ENCODE measurements at regions of chr6 and their contacts with region 1.

Region 1: DNA sequence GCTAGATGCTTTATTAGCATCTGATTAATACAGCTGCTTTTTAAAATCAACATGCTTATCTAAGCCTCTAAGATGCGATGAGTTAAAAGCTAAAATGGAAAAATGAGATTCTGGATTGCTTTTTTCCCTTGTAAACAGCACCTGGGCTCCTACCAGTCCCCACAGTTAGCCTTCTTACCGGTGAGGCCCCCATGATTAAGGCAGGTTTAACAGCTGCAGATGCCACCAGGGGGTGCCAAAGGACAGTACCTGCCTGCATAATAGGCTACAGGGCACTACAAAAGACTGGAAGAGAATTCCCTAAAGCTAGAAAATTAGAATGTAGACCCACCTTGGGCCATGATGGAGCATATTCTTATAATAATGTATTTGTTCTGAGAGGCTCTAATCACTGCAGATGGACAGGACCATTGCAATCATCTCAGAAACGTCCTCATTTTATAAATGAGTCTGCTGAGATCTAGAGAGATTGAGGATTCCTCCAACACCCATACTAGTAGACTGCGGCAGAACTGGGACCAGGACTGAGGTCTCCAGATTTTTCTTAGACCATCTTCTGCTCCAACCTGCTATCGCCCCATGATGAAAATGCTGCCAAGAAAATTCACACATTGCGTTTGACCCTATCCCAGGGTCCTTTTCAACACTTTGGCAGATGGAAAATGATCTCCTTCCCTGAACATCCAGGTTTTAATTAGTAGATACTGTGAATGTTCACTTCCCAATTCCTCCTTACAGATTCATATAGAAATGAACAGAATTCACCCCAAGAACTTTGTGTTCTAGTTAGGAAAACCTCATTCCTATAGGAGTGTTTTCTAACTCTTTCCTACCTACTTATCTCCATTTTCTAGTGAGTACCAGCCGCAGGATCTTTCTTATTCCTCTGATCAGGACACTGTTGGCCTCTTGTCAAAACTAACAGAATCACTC is 148.8 kb downstream of the RPS12 start:
- DNase-seq: peak; percentile 77
- H3K4me3 Mint-ChIP-seq: no peak overlapping the region
- H3K27ac Mint-ChIP-seq: no peak overlapping the region
- H3K4me1 Mint-ChIP-seq: no peaks in the 10 kb centered on the region
- H3K27me3 Mint-ChIP-seq: peaks cover 29% of the 10 kb centered on the region

Region 2: GRCh38 chr6:132669690-132670291 is 293.4 kb before region 1 on chr6:
- CTCF ChIA-PET with region 1: interaction called, 3 read pairs
- intact Hi-C with region 1: loop called (anchors 1 kb)
- DNase-seq: no peak
- H3K4me3 Mint-ChIP-seq: no peak overlapping the region
- H3K27ac Mint-ChIP-seq: no peak overlapping the region
- H3K4me1 Mint-ChIP-seq: peaks cover 3% of the 10 kb centered on the region
- H3K27me3 Mint-ChIP-seq: no peaks in the 10 kb centered on the region

Region 3: DNA sequence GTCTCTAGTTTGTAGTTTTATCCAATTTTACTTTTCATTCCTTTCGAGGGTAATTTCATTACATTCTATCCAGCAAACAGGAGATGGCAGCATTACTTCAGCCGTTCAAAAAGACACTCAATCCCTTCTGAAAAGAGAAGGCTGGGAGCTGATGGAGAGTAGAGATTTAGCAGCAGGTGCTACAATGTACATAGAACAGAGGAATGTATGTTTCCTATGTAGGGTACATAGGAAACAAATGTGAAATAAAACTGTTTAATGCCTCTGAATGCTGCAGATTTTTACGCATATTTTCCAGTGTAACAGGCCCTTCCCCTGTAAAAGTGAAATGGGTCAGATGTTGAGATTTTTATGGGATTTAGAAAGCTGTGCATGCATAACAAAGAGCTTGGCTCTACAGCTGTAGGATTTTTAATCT is 132.9 kb before region 1 on chr6:
- CTCF ChIA-PET with region 1: interaction called, 22 read pairs
- intact Hi-C with region 1: loop called (anchors 1 kb)
- DNase-seq: no peak
- H3K4me3 Mint-ChIP-seq: no peak overlapping the region
- H3K27ac Mint-ChIP-seq: no peak overlapping the region
- H3K4me1 Mint-ChIP-seq: no peaks in the 10 kb centered on the region
- H3K27me3 Mint-ChIP-seq: no peaks in the 10 kb centered on the region

Region 4: GRCh38 chr6:133017581-133017980 is 54.4 kb after region 1 on chr6:
- CTCF ChIA-PET with region 1: no interaction called
- intact Hi-C with region 1: no loop called
- DNase-seq: no peak
- H3K4me3 Mint-ChIP-seq: no peak overlapping the region
- H3K27ac Mint-ChIP-seq: no peak overlapping the region
- H3K4me1 Mint-ChIP-seq: no peaks in the 10 kb centered on the region
- H3K27me3 Mint-ChIP-seq: peaks cover 4% of the 10 kb centered on the region

Region 5: DNA sequence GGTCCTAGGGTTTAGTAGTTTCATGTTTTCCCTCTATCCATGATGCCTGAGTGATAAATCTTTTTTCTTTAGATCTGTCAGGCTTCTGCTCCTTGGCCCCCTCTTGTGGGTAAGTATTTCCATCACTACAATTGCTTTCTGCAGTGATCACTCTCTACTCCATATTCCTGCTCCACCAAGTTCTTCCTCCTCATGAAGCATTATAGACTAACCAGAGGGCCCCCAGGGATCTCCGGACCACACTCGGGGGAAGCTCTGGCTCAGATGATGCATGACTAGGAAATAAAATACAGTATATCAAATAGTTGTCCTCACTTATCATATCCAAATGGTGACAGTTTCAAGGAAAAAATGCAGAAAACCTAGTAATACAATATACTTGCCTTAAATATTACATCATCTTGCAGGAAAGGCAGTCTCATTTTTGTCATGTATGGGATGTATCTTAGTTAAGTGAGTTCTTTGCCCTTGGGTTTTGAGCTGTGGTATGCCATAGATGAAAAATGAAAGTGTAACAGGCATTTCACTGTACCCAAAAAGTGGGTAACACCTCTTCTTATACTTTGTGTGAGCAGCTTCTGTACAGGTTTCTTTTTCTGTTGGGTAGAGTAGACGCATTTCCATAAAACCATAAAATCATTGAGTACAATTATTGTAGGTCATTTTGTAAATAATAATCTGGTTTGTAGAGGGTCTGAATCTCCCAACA is 77.0 kb after region 1 on chr6:
- CTCF ChIA-PET with region 1: no interaction called
- intact Hi-C with region 1: loop called (anchors 2 kb)
- DNase-seq: no peak
- H3K4me3 Mint-ChIP-seq: no peak overlapping the region
- H3K27ac Mint-ChIP-seq: no peak overlapping the region
- H3K4me1 Mint-ChIP-seq: no peaks in the 10 kb centered on the region
- H3K27me3 Mint-ChIP-seq: peaks cover 2% of the 10 kb centered on the region

Region 6: GRCh38 chr6:133301835-133302234 is 338.6 kb after region 1 on chr6:
- CTCF ChIA-PET with region 1: no interaction called
- intact Hi-C with region 1: no loop called
- DNase-seq: no peak
- H3K4me3 Mint-ChIP-seq: no peak overlapping the region
- H3K27ac Mint-ChIP-seq: no peak overlapping the region
- H3K4me1 Mint-ChIP-seq: no peaks in the 10 kb centered on the region
- H3K27me3 Mint-ChIP-seq: peaks cover 6% of the 10 kb centered on the region

Region 7: DNA sequence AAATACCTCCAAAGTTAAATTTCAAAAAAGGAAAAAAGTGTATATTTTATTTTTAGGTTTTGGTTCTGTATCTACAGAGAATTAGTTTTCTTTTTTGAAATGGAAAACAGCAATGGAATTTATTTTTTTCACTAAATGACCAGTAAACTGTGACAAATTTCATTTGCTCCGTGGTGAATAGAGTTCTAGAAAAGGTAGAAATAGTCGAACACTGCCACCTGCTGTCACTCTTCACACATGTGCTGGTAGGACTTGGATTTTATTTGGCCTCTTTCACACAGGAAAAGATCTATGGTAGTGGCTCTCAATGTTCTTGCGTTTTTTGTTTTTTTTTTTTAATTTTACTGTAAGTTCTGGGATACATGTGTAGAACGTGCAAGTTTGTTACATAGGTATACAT is 590.5 kb after region 1 on chr6:
- CTCF ChIA-PET with region 1: no interaction called
- intact Hi-C with region 1: loop called (anchors 1 kb)
- DNase-seq: peak; percentile 47
- H3K4me3 Mint-ChIP-seq: no peak overlapping the region
- H3K27ac Mint-ChIP-seq: no peak overlapping the region
- H3K4me1 Mint-ChIP-seq: no peaks in the 10 kb centered on the region
- H3K27me3 Mint-ChIP-seq: peaks cover 4% of the 10 kb centered on the region

Region 8: GRCh38 chr6:133923938-133924593 is 960.9 kb after region 1 on chr6:
- CTCF ChIA-PET with region 1: interaction called, 3 read pairs
- intact Hi-C with region 1: loop called (anchors 1 kb)
- DNase-seq: peak; percentile 74
- H3K4me3 Mint-ChIP-seq: no peak overlapping the region
- H3K27ac Mint-ChIP-seq: no peak overlapping the region
- H3K4me1 Mint-ChIP-seq: no peaks in the 10 kb centered on the region
- H3K27me3 Mint-ChIP-seq: peaks cover 19% of the 10 kb centered on the region

Measured in activated naive CD4-positive, alpha-beta T cell treated with anti-CD3 and anti-CD28 coated beads for 36 hours (primary cell).